ENCODE measurements at regions of chr2 and their contacts with region 1.

Region 1: GRCh38 chr2:207769597-207770486 is at the start of gene FZD5:
- DNase-seq: peak; percentile 91
- H3K4me3 ChIP-seq: peak within 1 kb of the TSS; percentile 66 to 80 (median 67)
- H3K27ac ChIP-seq: no peak within 1 kb of the TSS
- H3K4me1 ChIP-seq: peaks cover 16% of the 10 kb centered on the region
- H3K27me3 ChIP-seq: no peaks in the 10 kb centered on the region
- CTCF ChIP-seq: peak; percentile 51 to 72
- POLR2A ChIP-seq: no peak
- total RNA-seq, gene FZD5: 2.8 and 3.3 TPM in 2 replicates

Region 2: DNA sequence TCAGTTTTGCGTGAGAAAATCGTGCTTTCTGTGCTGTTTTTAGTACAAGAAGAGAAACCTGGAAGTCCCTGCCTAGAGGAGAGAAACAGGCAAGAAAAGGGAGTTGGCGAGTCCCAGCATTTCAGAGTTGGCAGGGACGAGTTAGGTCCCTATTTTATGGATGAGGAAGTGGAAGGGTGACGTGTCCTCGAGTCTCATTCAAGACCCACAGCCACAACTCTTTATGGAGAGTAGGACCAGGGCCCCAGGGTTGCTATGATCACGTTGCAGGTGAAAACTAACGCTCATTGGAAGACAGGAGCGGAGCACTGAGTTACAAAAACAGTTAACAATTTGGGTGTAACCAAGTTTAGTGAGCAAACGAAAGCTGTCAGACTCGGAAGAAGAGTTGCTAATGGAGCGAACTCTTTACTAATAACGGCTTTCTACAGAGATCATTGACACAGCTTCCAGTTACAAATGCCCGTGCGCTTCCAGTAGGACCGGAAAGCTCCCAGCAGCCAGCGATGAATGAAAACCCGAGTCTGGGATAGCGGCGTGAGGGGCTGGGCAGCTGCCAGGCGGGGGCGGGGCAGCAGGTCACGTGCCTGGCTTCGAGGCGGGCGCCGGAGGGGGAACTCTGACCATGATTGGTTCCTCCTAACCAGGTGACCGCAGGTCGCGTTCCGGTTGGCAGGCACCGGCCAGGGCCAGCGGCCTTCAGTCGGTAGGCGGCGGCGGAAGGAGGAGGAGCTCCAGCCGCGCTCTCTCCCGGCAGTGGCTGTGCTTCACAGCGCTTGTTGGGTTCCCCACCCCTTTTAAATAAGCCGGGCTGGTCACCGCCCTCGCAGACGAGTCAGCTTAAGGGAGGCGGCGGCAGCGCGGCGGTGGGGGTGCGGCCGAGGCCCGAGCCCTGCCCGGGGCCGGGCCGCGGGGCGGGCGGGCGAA is 58.8 kb before region 1 on chr2 and contains the start of gene CCNYL1:
- CTCF ChIA-PET with region 1: interaction called, 4 read pairs
- POLR2A ChIA-PET with region 1: no interaction called
- dilution Hi-C with region 1: no loop called
- intact Hi-C with region 1: loop called (anchors 1 kb)
- DNase-seq: peak; percentile 100
- H3K4me3 ChIP-seq: peak within 1 kb of the TSS; percentile 78 to 88 (median 78)
- H3K27ac ChIP-seq: peak within 1 kb of the TSS; percentile 86
- H3K4me1 ChIP-seq: peaks cover 21% of the 10 kb centered on the region
- H3K27me3 ChIP-seq: no peaks in the 10 kb centered on the region
- CTCF ChIP-seq: peak in 1 of 2 donors; percentile 3
- POLR2A ChIP-seq: peak; percentile 69
- total RNA-seq, gene CCNYL1: 47.3 and 49.3 TPM in 2 replicates

Region 3: GRCh38 chr2:207847807-207848544 is 78.1 kb after region 1 on chr2:
- CTCF ChIA-PET with region 1: interaction called, 7 read pairs
- POLR2A ChIA-PET with region 1: interaction called, 4 read pairs
- dilution Hi-C with region 1: no loop called
- intact Hi-C with region 1: loop called (anchors 1 kb)
- DNase-seq: peak; percentile 97
- H3K4me3 ChIP-seq: no peak overlapping the region
- H3K27ac ChIP-seq: peak overlapping the region; percentile 47
- H3K4me1 ChIP-seq: peaks cover 18% of the 10 kb centered on the region
- H3K27me3 ChIP-seq: no peaks in the 10 kb centered on the region
- CTCF ChIP-seq: no peak
- POLR2A ChIP-seq: peak; percentile 61

Region 4: DNA sequence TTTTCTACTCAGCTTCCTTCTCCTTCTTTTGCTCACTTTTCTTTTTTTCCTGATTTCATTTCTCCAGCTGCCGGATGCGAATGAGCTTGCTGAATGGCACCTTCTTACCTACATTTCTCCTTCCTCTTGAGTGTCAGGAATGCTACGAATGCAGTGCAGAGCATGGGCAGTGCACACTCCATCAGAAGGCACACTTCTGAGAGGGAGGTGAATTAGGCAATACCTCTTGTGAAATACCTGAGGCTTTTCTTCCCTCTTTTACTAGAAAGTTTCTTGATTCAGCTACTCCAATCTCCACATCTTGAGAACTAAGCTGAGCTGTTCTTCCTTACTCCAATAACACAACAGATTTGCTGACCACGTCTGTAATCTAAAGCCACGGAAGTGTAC is 204.4 kb after region 1 on chr2:
- CTCF ChIA-PET with region 1: interaction called, 54 read pairs
- POLR2A ChIA-PET with region 1: no interaction called
- dilution Hi-C with region 1: no loop called
- intact Hi-C with region 1: loop called (anchors 1 kb)
- DNase-seq: no peak
- H3K4me3 ChIP-seq: no peak overlapping the region
- H3K27ac ChIP-seq: no peak overlapping the region
- H3K4me1 ChIP-seq: no peaks in the 10 kb centered on the region
- H3K27me3 ChIP-seq: no peaks in the 10 kb centered on the region
- CTCF ChIP-seq: no peak
- POLR2A ChIP-seq: no peak

Region 5: DNA sequence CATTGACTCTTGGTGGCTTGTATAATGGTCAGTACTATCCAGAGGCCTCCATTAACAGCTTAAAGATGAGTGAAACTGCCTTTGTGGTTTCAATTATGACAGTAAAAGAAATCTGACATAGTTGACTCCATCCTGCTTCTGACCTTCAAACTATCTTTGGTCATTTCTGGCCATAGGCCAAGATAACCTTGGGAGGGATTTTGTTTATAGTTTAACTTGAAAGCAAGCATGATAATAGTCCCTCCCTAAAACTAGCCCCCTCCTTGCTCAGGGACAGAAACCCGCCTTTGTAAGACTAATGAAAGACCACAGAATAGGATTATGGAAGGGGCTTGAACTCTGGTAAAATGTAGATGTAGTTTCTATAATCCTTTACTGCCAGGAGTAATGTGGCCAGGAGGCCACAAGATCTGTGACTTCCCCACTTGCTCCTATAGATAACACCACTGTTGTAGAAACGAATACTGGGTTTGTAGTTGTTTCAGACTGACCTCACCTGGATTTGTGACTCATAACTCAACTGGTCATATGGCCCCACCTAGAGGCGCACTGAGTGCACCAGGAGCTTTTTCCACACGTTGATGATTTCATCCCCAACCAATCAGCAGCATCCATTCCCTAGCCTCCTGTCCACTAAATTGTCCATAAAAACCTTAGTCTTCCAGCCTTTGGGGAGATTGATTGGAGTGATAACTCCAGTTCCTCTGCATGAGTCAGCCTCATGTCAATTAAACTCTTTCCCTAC is 264.1 kb after region 1 on chr2:
- CTCF ChIA-PET with region 1: interaction called, 35 read pairs
- POLR2A ChIA-PET with region 1: interaction called, 10 read pairs
- dilution Hi-C with region 1: no loop called
- intact Hi-C with region 1: loop called (anchors 1 kb)
- DNase-seq: peak; percentile 59
- H3K4me3 ChIP-seq: no peak overlapping the region
- H3K27ac ChIP-seq: no peak overlapping the region
- H3K4me1 ChIP-seq: no peaks in the 10 kb centered on the region
- H3K27me3 ChIP-seq: peaks cover 9 to 11% of the 10 kb centered on the region in 2 experiments
- CTCF ChIP-seq: peak; percentile 16 to 20
- POLR2A ChIP-seq: no peak

Region 6: DNA sequence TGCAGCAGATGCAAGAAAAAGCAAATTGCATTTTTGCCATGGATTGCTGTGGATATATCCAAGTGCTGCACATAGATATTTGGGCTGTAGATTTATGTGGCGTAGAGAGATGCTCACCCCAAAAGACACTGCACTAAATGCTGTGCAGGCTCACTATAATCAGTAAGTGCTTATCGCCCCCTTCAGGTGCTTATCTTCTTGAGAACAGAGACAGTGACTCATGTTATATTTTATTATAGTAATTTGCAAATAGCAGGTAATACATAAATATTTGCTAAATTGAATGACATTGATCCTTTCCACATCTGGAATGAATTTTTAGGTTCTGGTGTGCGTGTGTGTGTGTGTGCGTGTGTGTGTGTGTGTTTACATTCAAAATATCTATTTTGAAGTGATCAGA is 292.3 kb after region 1 on chr2:
- CTCF ChIA-PET with region 1: interaction called, 3 read pairs
- POLR2A ChIA-PET with region 1: no interaction called
- dilution Hi-C with region 1: no loop called
- intact Hi-C with region 1: loop called (anchors 2 kb)
- DNase-seq: peak; percentile 30
- H3K4me3 ChIP-seq: no peak overlapping the region
- H3K27ac ChIP-seq: no peak overlapping the region
- H3K4me1 ChIP-seq: no peaks in the 10 kb centered on the region
- H3K27me3 ChIP-seq: no peaks in the 10 kb centered on the region
- CTCF ChIP-seq: peak; percentile 19 to 33
- POLR2A ChIP-seq: no peak

Region 7: DNA sequence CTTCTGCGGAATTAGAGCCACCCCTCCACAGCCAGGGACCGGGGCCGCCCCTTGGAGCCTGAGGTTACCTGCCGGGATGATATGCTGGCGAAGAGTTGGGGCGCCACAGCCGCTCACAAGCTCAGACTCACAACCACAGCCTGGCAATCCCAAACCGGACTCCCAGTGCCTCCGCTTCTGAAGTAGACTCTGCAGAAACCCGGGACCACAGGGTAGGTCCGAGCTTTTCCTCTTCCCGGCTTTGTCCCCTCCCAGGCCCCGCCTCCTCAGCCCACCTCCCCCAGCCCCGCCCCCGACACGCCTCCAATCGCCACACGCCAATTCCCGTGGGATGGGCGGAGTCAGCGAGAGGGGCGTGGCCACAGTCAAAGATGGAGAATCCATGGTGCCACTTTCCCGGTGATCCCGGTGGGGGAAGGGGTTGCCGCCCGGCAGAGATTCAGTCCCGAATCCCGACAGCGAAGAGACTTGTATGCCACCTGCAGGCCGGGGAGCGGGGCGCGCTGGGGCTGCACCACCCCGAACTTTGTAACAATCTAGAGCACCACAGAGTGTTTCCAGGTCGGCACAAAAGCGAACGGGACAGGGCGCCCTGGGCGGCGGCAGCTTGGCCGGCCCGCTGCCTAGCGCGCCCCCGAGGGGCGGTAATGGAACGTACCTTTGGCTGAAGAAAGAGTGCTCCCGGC is 485.2 kb after region 1 on chr2 and contains the start of gene IDH1:
- CTCF ChIA-PET with region 1: no interaction called
- POLR2A ChIA-PET with region 1: no interaction called
- dilution Hi-C with region 1: no loop called
- intact Hi-C with region 1: loop called (anchors 10 kb)
- DNase-seq: peak; percentile 95
- H3K4me3 ChIP-seq: peak within 1 kb of the TSS; percentile 74 to 99 (median 99)
- H3K27ac ChIP-seq: peak within 1 kb of the TSS; percentile 50
- H3K4me1 ChIP-seq: peaks cover 24% of the 10 kb centered on the region
- H3K27me3 ChIP-seq: no peaks in the 10 kb centered on the region
- CTCF ChIP-seq: peak; percentile 52 to 74
- POLR2A ChIP-seq: peak; percentile 58
- total RNA-seq, gene IDH1: 107 and 124 TPM in 2 replicates

Measured in endothelial cell of umbilical vein (primary cell).